ENCODE measurements at regions of chr1 and their contacts with region 1.

Region 1: DNA sequence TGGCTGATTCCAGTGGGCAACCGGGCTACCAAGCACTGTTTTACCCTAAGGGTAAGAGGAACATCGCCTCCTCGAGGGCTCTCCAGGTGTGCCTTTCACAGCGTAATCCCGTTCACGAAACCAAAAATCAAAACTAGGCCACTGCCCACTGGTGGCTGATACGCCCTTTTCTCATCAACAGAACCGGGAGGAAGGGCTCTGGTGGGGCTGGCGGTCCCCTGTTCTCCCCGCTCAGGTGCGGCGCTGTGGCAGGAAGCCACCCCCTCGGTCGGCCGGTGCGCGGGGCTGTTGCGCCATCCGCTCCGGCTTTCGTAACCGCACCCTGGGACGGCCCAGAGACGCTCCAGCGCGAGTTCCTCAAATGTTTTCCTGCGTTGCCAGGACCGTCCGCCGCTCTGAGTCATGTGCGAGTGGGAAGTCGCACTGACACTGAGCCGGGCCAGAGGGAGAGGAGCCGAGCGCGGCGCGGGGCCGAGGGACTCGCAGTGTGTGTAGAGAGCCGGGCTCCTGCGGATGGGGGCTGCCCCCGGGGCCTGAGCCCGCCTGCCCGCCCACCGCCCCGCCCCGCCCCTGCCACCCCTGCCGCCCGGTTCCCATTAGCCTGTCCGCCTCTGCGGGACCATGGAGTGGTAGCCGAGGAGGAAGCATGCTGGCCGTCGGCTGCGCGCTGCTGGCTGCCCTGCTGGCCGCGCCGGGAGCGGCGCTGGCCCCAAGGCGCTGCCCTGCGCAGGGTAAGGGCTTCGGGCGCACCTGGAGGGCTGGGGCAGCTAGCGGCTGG is at the start of gene IL6R:
- DNase-seq: peak; percentile 99
- H3K4me3 ChIP-seq: peak within 1 kb of the TSS; percentile 65 to 90 (median 84)
- H3K27ac ChIP-seq: peak within 1 kb of the TSS; percentile 98 to 99 (median 98)
- H3K4me1 ChIP-seq: peaks cover 0 to 47% (median 44%) of the 10 kb centered on the region in 4 donors
- H3K27me3 ChIP-seq: no peaks in the 10 kb centered on the region
- CTCF ChIP-seq: peak; percentile 40 to 52 (median 52)
- EP300 ChIP-seq: peak in 3 of 4 donors; percentile 61 to 85 (median 70)
- POLR2A ChIP-seq: peak; percentile 57 to 82
- total RNA-seq, gene IL6R: 22.9 to 40.2 (median 36.6) TPM

Region 2: GRCh38 chr1:154324669-154325582 is 80.2 kb before region 1 on chr1 and contains the start of gene ATP8B2:
- intact Hi-C with region 1: loop called (anchors 5 kb)
- DNase-seq: peak; percentile 88
- H3K4me3 ChIP-seq: peak within 1 kb of the TSS; percentile 69 to 85 (median 76)
- H3K27ac ChIP-seq: peak within 1 kb of the TSS; percentile 93 to 98 (median 96)
- H3K4me1 ChIP-seq: peaks cover 0 to 50% (median 41%) of the 10 kb centered on the region in 4 donors
- H3K27me3 ChIP-seq: no peaks in the 10 kb centered on the region
- CTCF ChIP-seq: peak; percentile 86 to 92 (median 92)
- EP300 ChIP-seq: no peak
- POLR2A ChIP-seq: no peak
- total RNA-seq, gene ATP8B2: 53.1 to 64.3 (median 56.6) TPM

Region 3: DNA sequence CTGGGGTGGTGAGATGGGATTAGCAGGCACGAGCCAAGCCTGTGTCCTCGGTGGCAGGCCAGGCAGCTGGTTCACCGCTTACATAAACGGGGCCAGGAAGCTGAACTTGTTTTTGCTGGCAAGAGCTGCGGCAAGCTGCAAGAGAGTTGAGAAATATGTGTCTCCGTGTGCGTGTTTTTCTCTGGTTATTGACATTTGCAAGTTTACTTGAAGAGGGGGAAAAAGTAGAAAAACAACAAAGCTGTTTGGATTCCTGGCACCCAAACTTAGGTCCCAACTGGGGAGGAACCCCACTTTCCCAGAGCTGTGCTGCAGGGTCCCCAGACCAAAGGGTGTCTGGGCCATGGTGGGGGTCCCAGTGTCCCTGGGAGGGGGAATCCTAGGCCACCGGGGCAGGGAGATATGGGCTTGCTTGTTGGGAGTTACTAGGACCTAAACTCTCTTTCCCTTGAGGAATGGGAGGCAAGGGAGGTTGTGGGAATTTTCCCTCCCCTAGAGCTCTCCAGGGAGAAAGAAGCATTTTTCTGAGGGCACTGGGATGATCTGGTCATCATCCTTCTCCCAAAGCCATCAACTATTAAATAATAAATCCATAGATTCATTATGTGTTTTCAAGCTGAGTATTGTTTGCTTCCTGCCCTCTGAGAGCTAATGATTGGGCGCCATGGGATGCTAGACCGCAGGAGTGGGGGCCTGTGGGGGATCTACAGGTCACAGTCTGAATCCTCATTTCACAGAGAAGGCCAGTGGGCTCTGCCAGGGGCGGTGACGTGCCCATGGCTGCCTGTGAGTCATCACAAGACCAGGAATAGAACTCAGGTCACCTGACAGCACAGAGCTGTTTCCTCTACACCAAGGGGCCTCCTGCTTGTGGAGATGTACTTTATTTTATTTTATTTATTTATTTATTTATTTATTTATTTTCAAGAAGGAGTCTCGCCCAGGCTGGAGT is 14.7 kb after region 1 on chr1:
- intact Hi-C with region 1: loop called (anchors 1 kb)
- DNase-seq: peak; percentile 98
- H3K4me3 ChIP-seq: peak overlapping the region in 2 of 4 donors; percentile 21 to 26
- H3K27ac ChIP-seq: peak overlapping the region; percentile 93 to 99 (median 98)
- H3K4me1 ChIP-seq: peaks cover 0 to 100% (median 93%) of the 10 kb centered on the region in 4 donors
- H3K27me3 ChIP-seq: no peaks in the 10 kb centered on the region
- CTCF ChIP-seq: no peak
- EP300 ChIP-seq: peak; percentile 49 to 91 (median 80)
- POLR2A ChIP-seq: no peak

Region 4: DNA sequence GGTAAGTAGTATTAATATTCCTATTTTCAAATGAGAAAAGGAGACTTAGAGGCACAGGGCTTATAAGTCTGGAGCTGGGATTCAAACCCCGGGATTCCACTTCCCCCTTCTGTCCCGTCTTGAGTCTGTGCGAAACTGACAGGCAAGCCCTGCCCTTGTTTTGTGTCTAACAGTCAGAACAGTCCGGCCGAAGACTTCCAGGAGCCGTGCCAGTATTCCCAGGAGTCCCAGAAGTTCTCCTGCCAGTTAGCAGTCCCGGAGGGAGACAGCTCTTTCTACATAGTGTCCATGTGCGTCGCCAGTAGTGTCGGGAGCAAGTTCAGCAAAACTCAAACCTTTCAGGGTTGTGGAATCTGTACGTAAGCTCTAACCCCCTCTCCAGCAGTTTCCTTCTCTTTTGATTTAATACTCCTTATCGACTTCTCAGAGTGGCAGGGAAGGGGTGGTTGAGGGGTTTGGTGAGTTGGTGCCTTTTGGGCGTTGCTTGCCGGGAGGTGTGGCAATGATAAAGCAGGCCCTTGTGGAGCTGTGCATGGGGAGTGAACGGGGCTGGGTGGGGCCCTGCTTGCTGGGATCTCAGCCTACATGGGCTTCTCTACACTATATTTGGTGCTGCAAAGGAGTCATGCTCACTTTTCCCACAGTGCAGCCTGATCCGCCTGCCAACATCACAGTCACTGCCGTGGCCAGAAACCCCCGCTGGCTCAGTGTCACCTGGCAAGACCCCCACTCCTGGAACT is 29.3 kb after region 1 on chr1:
- intact Hi-C with region 1: loop called (anchors 1 kb)
- DNase-seq: peak; percentile 98
- H3K4me3 ChIP-seq: peak overlapping the region; percentile 18 to 50 (median 40)
- H3K27ac ChIP-seq: peak overlapping the region; percentile 91 to 99 (median 96)
- H3K4me1 ChIP-seq: peaks cover 0 to 99% (median 90%) of the 10 kb centered on the region in 4 donors
- H3K27me3 ChIP-seq: no peaks in the 10 kb centered on the region
- CTCF ChIP-seq: no peak
- EP300 ChIP-seq: peak in 3 of 4 donors; percentile 13 to 48 (median 46)
- POLR2A ChIP-seq: no peak

Region 5: DNA sequence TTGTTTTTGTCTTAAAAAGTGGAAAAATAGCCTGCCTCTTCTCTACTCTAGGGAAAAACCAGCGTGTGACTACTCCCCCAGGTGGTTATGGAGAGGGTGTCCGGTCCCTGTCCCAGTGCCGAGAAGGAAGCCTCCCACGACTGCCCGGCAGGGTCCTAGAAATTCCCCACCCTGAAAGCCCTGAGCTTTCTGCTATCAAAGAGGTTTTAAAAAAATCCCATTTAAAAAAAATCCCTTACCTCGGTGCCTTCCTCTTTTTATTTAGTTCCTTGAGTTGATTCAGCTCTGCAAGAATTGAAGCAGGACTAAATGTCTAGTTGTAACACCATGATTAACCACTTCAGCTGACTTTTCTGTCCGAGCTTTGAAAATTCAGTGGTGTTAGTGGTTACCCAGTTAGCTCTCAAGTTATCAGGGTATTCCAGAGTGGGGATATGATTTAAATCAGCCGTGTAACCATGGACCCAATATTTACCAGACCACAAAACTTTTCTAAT is 61.8 kb after region 1 on chr1:
- intact Hi-C with region 1: loop called (anchors 2 kb)
- DNase-seq: no peak
- H3K4me3 ChIP-seq: no peak overlapping the region
- H3K27ac ChIP-seq: peak overlapping the region in 3 of 4 donors; percentile 27 to 89 (median 47)
- H3K4me1 ChIP-seq: peaks cover 0 to 47% (median 25%) of the 10 kb centered on the region in 4 donors
- H3K27me3 ChIP-seq: no peaks in the 10 kb centered on the region
- CTCF ChIP-seq: peak in 2 of 4 experiments; percentile 31 to 36
- EP300 ChIP-seq: no peak
- POLR2A ChIP-seq: no peak

Region 6: GRCh38 chr1:154707901-154708463 is 302.8 kb after region 1 on chr1:
- intact Hi-C with region 1: no loop called
- DNase-seq: no peak
- H3K4me3 ChIP-seq: no peak overlapping the region
- H3K27ac ChIP-seq: no peak overlapping the region
- H3K4me1 ChIP-seq: no peaks in the 10 kb centered on the region
- H3K27me3 ChIP-seq: no peaks in the 10 kb centered on the region
- CTCF ChIP-seq: no peak
- EP300 ChIP-seq: no peak
- POLR2A ChIP-seq: no peak

Measured in sigmoid colon (tissue), 7 donors.